Calu3 (cell line): ENCODE measurements at regions of chr2 and their contacts with region 1.

Region 1: DNA sequence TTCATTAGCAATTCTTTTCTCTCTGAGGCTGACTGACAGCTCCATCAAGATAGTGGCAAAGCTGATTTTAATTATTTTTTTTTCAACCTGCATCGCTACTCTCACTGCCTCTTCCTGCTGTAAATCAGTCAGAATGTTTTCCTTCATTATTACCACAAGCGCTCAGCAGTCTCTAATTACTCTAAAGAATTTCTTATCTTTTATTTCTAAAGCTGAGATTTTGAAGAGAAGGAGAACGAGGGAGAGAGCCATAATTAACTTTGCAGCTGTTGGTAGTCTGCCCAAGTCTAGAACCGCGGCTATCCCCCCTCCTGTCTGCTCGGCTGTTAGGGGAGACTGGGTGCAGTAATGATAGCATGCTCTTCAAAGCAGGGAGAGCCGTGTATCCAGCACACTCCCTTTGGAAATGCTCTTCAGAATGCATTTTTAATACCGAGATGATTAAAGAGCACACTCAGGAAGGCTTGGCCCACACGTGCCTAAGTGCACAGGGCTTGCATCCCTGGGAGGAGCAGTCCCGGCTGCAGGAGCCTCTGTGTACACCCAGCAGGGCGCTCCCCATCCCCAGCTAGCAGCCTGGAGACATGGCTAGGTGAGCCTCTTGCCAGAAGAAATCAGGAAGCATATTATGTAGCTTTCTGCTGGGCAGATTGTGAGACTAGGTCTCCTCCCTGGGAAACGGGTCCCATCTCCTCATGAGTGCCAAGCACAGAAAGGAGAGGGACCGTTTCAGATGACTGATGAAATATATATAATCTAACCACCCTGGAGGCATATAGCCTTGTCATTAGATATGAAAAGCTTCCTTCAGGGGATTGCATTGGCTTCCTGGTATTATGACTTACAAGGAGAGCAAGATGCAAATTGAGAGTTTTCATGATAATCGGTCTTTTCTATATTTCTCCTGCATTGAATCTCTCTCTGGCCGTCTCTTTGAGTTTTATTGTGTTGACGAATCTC is 555.2 kb downstream of the CMPK2 start:
- DNase-seq: no peak
- H3K4me3 Mint-ChIP-seq: no peak overlapping the region
- H3K27ac Mint-ChIP-seq: no peak overlapping the region
- H3K4me1 Mint-ChIP-seq: no peaks in the 10 kb centered on the region
- H3K27me3 Mint-ChIP-seq: no peaks in the 10 kb centered on the region
- CTCF ChIP-seq: no peak

Region 2: DNA sequence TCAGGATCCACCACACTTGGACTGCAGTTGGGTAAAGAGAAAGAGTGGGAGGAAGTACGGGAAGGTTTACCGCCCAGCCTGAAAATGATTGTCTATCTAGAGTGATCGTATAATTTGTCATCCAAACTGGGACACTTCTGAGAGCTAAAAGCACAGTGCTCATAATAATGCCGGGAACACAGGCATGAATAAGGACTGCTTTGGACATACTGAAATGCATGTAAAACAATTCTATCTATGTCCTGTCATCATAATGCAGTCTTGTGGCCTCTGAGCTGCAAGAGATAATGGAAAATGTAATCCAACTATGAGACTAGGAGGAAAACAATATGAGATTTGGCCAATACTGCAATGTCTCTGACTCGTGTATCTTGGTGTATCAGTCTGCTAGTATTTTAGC is 182.8 kb before region 1 on chr2:
- CTCF ChIA-PET with region 1: no interaction called
- intact Hi-C with region 1: loop called (anchors 5 kb)
- DNase-seq: no peak
- H3K4me3 Mint-ChIP-seq: no peak overlapping the region
- H3K27ac Mint-ChIP-seq: no peak overlapping the region
- H3K4me1 Mint-ChIP-seq: no peaks in the 10 kb centered on the region
- H3K27me3 Mint-ChIP-seq: no peaks in the 10 kb centered on the region
- CTCF ChIP-seq: no peak